Calu3 (cell line): ENCODE measurements at regions of chr22 and their contacts with region 1.

Region 1: GRCh38 chr22:25110846-25111578 is 88.6 kb upstream of the CRYBB3 start:
- DNase-seq: peak; percentile 91
- H3K4me3 Mint-ChIP-seq: peak overlapping the region; percentile 88
- H3K27ac Mint-ChIP-seq: peak overlapping the region; percentile 100
- H3K4me1 Mint-ChIP-seq: peaks cover 40% of the 10 kb centered on the region
- H3K27me3 Mint-ChIP-seq: no peaks in the 10 kb centered on the region
- CTCF ChIP-seq: peak; percentile 63

Region 2: GRCh38 chr22:24789516-24789915 is 321.5 kb before region 1 on chr22:
- CTCF ChIA-PET with region 1: no interaction called
- intact Hi-C with region 1: no loop called
- DNase-seq: no peak
- H3K4me3 Mint-ChIP-seq: no peak overlapping the region
- H3K27ac Mint-ChIP-seq: no peak overlapping the region
- H3K4me1 Mint-ChIP-seq: no peaks in the 10 kb centered on the region
- H3K27me3 Mint-ChIP-seq: peaks cover 54% of the 10 kb centered on the region
- CTCF ChIP-seq: no peak

Region 3: DNA sequence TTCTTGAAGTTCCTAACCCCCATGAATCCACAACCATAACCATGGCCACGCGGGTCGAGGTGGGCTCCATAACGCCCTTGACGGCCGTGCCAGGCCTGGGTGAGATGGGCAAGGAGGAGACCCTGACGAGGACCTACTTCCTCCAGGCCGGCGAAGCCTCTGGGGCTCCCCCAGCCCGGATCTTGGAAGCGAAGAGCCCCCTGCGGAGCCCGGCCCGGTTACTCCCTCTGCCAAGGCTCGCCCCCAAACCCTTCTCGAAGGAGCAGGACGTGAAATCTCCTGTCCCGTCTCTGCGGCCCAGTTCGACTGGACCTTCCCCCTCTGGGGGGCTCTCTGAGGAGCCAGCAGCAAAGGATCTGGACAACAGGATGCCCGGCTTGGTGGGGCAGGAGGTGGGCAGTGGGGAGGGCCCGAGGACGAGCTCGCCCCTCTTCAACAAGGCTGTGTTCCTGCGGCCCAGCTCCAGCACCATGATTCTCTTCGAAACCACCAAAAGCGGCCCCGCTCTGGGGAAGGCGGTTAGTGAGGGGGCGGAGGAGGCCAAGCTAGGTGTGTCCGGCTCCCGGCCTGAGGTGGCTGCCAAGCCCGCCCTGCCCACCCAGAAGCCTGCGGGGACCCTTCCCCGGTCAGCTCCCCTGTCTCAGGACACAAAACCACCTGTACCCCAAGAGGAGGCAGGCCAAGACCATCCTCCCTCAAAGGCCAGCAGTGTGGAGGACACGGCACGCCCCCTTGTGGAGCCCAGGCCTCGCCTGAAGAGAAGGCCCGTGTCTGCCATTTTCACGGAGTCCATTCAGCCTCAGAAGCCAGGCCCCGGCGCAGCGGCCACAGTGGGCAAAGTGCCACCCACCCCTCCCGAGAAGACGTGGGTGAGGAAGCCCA is 82.8 kb before region 1 on chr22:
- CTCF ChIA-PET with region 1: no interaction called
- intact Hi-C with region 1: no loop called
- DNase-seq: peak; percentile 38
- H3K4me3 Mint-ChIP-seq: no peak overlapping the region
- H3K27ac Mint-ChIP-seq: no peak overlapping the region
- H3K4me1 Mint-ChIP-seq: peaks cover 41% of the 10 kb centered on the region
- H3K27me3 Mint-ChIP-seq: no peaks in the 10 kb centered on the region
- CTCF ChIP-seq: no peak

Region 4: DNA sequence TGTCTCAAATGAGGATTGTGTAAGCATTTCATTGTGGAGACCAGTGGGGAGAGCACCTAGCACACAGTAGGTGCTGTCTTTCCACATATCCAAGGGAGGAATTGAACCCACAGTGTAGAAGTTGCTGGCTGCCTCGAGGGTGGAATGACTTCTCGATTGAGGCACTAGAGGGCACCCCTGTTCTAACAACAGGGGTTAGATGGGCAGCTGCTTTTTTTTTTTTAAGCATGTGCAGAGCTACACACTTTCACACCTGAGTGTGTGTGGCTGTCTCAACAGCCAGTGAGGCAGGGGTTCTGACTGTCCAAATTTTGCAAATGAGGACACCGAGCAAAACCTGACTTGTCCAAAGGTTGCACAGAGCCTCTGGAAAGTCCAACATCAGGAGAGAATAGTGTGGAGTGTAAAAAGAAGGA is 29.6 kb before region 1 on chr22:
- CTCF ChIA-PET with region 1: interaction called, 10 read pairs
- intact Hi-C with region 1: loop called (anchors 2 kb)
- DNase-seq: peak; percentile 75
- H3K4me3 Mint-ChIP-seq: no peak overlapping the region
- H3K27ac Mint-ChIP-seq: no peak overlapping the region
- H3K4me1 Mint-ChIP-seq: peaks cover 48% of the 10 kb centered on the region
- H3K27me3 Mint-ChIP-seq: no peaks in the 10 kb centered on the region
- CTCF ChIP-seq: peak; percentile 54

Region 5: GRCh38 chr22:25134028-25134427 is 23.0 kb after region 1 on chr22:
- CTCF ChIA-PET with region 1: interaction called, 18 read pairs
- intact Hi-C with region 1: no loop called
- DNase-seq: peak; percentile 63
- H3K4me3 Mint-ChIP-seq: no peak overlapping the region
- H3K27ac Mint-ChIP-seq: peak overlapping the region; percentile 39
- H3K4me1 Mint-ChIP-seq: peaks cover 48% of the 10 kb centered on the region
- H3K27me3 Mint-ChIP-seq: no peaks in the 10 kb centered on the region
- CTCF ChIP-seq: no peak

Region 6: DNA sequence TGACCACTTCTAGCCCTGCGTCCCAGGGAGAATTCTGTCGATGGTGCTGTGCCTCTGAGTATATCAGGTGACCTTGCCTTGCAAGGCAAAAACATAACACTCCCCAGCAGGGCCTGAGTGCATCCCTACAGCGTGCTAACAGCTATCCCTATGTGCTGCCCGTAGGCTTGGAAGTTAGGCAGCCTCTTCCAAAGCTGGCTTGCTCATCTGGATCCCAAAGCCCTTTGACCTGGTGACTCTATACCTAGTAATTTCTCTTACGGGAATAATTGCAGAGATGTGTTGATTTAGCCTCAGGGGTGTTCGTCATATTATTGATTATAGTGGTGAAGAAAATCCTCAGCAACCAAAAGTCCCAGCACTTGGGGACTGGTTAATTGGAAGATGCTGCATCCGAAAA is 56.1 kb after region 1 on chr22:
- CTCF ChIA-PET with region 1: interaction called, 15 read pairs
- intact Hi-C with region 1: loop called (anchors 5 kb)
- DNase-seq: peak; percentile 16
- H3K4me3 Mint-ChIP-seq: peak overlapping the region; percentile 14
- H3K27ac Mint-ChIP-seq: peak overlapping the region; percentile 61
- H3K4me1 Mint-ChIP-seq: peaks cover 55% of the 10 kb centered on the region
- H3K27me3 Mint-ChIP-seq: no peaks in the 10 kb centered on the region
- CTCF ChIP-seq: no peak

Region 7: DNA sequence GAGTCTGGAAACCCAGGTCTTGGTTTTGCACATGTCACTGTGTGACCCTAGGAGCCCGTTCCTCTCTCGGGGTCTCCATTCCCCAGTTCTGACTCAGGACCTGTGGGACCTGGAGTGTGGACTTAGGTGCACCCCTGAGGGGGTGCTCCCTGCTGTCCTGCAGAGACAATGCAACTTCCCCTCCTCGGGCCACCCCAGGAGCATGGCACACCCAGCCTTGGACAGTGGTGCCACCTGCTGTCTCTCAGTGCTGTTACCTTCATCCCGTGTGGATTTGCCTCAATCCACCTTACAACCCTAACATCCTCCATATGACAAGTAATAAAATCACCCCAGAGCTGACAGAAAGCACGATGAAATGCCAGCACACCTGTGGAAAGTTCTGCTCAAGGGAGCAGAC is 61.1 kb after region 1 on chr22:
- CTCF ChIA-PET with region 1: interaction called, 15 read pairs
- intact Hi-C with region 1: loop called (anchors 5 kb)
- DNase-seq: peak; percentile 72
- H3K4me3 Mint-ChIP-seq: no peak overlapping the region
- H3K27ac Mint-ChIP-seq: no peak overlapping the region
- H3K4me1 Mint-ChIP-seq: peaks cover 26% of the 10 kb centered on the region
- H3K27me3 Mint-ChIP-seq: no peaks in the 10 kb centered on the region
- CTCF ChIP-seq: peak; percentile 76